BJ (cell line): ENCODE measurements at regions of chr7 and their contacts with region 1.

Region 1: DNA sequence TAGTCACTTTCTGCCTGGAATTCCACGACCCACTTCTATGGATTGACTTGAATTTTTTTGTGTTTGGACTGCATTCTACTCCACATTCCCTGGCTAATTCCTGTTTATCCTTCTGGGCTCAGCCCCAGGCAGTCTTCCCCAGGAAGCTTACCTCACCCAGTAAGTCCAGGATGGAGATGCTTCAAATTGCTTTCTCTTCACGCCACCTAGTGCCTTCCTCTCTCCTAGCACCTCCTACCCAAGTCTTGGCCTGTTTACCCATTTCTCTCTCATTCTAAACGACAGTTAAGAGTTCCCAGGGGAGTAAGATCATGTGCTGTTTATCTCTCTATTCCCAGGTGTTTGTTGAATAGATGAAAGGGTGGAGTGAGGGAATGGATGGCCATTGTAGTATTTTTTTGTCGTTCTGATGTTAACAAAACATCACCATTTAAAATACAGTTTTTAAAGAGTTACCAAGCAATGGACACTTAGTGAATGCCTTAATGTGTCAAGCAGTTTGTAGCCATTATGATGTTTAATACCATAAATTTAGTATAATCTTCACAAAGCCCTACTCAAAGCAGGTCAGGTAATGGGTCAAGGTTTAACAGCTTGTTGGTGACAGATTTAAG is 45.5 kb upstream of the TARP start:
- DNase-seq: peak; percentile 56
- H3K4me3 ChIP-seq: no peak overlapping the region
- H3K27me3 ChIP-seq: no peaks in the 10 kb centered on the region
- CTCF ChIP-seq: peak; percentile 76

Region 2: DNA sequence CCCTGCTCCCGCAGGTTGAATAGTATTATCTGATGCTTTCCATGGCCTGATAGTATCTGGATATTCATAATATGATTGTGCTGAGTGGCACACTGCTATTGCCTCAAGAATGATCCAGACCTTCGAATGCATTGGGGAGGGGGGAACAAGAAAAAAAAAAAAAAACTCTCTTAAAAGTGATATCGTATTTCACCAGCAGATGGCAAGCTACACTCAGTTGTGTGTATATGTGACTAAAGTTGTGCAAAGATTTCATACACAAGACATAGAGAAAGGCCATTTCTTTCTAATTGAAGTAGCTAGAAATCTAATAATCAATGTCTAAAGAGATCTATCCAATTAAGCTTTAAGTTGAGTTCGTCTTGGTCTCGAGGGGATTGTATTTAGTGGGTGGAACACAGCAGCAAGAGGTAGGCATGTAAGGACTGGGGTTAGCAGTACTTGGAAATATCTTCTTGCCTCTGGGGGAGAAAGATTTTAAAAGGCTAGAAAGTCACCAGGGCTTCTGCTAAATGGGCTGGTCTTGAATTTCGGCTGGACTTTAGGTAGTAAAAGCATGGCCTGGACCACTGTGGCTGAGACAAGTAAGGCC is 417.6 kb before region 1 on chr7:
- CTCF ChIA-PET with region 1: interaction called, 10 read pairs
- POLR2A ChIA-PET with region 1: no interaction called
- DNase-seq: no peak
- H3K4me3 ChIP-seq: no peak overlapping the region
- H3K27me3 ChIP-seq: no peaks in the 10 kb centered on the region
- CTCF ChIP-seq: peak; percentile 45

Region 3: DNA sequence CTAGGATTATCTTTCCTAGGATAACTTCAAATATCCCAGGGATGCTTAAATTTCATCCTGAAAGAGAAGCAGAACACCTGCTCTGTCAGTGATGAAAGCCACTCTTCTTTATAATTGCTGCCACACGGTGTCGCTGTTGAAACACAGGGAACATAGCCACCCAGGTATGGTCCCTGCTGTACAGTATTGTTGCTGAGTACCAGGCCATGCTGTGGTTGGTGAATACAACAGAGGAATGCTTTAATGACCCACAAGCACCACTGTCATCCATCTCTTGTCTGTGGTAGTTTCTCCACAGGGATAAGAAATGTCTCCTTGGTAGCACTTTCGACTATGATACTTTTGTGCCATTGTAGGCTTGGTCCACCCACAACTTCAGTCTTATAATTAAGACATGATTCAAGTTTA is 211.4 kb before region 1 on chr7:
- CTCF ChIA-PET with region 1: interaction called, 37 read pairs
- POLR2A ChIA-PET with region 1: no interaction called
- DNase-seq: no peak
- H3K4me3 ChIP-seq: no peak overlapping the region
- H3K27me3 ChIP-seq: peaks cover 6% of the 10 kb centered on the region; the same call in 1 of the 2 replicates
- CTCF ChIP-seq: peak; percentile 73

Region 4: GRCh38 chr7:38222481-38223096 is 96.3 kb before region 1 on chr7:
- CTCF ChIA-PET with region 1: interaction called, 59 read pairs
- POLR2A ChIA-PET with region 1: no interaction called
- DNase-seq: no peak
- H3K4me3 ChIP-seq: no peak overlapping the region
- H3K27me3 ChIP-seq: no peaks in the 10 kb centered on the region
- CTCF ChIP-seq: peak; percentile 80

Region 5: GRCh38 chr7:38306914-38307313 is 12.0 kb before region 1 on chr7:
- CTCF ChIA-PET with region 1: interaction called, 13 read pairs
- POLR2A ChIA-PET with region 1: no interaction called
- DNase-seq: no peak
- H3K4me3 ChIP-seq: no peak overlapping the region
- H3K27me3 ChIP-seq: peaks cover 10% of the 10 kb centered on the region
- CTCF ChIP-seq: no peak

Region 6: DNA sequence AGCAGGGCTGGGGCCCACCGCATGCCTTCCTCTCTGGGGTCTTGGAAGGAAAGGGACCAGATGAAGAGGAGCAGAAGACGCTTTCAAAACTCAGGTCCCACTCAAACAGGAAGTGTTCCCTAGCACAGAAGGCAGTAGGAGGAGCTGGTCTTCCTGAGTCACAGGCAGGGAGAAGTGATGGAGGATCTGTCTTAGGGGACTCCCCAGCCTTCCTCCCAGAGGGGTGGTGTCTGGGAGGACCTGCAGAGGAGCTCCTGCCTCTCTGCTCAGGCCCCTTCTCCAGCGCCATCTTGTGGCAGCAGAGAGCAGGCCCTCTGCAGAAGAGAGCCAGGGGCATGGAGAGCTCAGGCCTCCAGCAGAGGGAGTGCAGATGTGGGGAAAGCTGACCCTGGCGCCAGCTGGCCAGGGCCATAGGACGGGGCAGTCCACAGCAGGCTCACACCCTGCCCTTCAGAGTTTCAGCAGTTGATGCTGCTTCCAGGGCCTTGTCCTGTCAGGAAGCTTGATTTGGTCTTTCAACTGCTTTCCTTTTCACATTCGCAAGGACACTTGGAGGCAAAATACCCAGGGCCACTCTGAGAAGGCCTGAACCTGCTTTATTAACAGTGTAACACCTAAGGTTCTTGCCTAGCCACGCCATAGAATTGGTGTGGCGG is 16.7 kb after region 1 on chr7:
- CTCF ChIA-PET with region 1: interaction called, 72 read pairs
- POLR2A ChIA-PET with region 1: interaction called, 4 read pairs
- DNase-seq: peak; percentile 25
- H3K4me3 ChIP-seq: no peak overlapping the region
- H3K27me3 ChIP-seq: no peaks in the 10 kb centered on the region
- CTCF ChIP-seq: peak; percentile 100

Region 7: GRCh38 chr7:38351601-38352000 is 32.7 kb after region 1 on chr7:
- CTCF ChIA-PET with region 1: no interaction called
- POLR2A ChIA-PET with region 1: no interaction called
- DNase-seq: no peak
- H3K4me3 ChIP-seq: no peak overlapping the region
- H3K27me3 ChIP-seq: no peaks in the 10 kb centered on the region
- CTCF ChIP-seq: no peak

Region 8: GRCh38 chr7:38463277-38464225 is 144.6 kb after region 1 on chr7:
- CTCF ChIA-PET with region 1: no interaction called
- POLR2A ChIA-PET with region 1: no interaction called
- DNase-seq: no peak
- H3K4me3 ChIP-seq: no peak overlapping the region
- H3K27me3 ChIP-seq: no peaks in the 10 kb centered on the region
- CTCF ChIP-seq: no peak